ENCODE measurements at regions of chr3 and their contacts with region 1.

Region 1: DNA sequence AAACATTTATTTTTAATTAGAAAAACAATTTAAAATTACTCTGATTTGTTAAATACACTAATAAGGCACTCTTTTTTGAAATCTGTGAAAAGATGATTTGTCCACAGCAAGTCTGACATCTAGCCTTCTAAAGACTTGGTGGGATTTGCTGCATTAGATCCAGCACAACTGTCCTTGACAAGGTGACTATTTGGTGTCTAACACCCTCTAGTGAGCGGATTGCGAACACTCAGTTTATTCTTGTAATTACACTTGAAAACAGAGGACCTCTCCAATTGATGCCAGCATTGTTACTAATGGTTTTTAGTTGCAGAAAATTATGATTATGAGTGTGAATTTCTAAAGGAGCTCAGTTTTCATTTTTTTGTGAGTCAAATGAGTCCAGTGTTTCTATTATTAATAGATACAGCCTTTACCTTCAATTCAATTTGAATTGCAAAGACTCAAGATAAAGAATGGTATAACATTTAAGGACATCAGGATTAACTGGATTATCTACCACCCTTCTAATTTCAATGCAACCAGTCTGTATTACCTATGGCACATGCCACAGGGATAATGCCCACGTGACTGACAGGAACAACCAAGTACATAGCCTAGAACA is 29.7 kb upstream of the STRIT1 start:
- DNase-seq: no peak
- H3K4me3 ChIP-seq: no peak overlapping the region
- H3K27ac ChIP-seq: no peak overlapping the region
- H3K4me1 ChIP-seq: no peaks in the 10 kb centered on the region
- H3K27me3 ChIP-seq: no peaks in the 10 kb centered on the region
- CTCF ChIP-seq: peak; percentile 18 to 52 (median 29)

Region 2: DNA sequence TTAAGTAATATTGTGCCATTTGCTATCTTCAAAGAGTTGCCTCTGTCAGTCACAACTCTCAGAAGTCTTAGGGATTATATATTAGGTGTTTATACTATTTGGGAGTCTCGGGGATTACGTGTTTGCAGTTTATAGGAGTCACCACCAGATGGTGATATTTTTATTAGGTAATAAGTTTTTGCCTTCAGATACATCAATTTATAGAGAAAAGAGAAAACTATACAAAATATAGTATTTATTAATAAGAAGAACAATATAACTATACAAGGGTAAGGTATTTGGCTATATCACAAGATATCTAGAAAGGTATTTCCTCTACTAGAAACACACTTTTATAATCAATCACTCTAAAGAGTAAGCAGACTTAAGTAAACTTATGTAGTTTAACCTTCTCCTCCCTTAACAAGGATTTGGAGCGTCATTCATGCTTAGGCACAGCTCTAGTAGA is 988.2 kb before region 1 on chr3:
- intact Hi-C with region 1: loop called (anchors 5 kb)
- DNase-seq: no peak
- H3K4me3 ChIP-seq: no peak overlapping the region
- H3K27ac ChIP-seq: no peak overlapping the region
- H3K4me1 ChIP-seq: no peaks in the 10 kb centered on the region
- H3K27me3 ChIP-seq: no peaks in the 10 kb centered on the region
- CTCF ChIP-seq: peak in 2 of 3 experiments; percentile 52 to 60

Region 3: GRCh38 chr3:154759966-154760365 is 563.2 kb before region 1 on chr3:
- intact Hi-C with region 1: loop called (anchors 2 kb)
- DNase-seq: no peak
- H3K4me3 ChIP-seq: no peak overlapping the region
- H3K27ac ChIP-seq: no peak overlapping the region
- H3K4me1 ChIP-seq: no peaks in the 10 kb centered on the region
- H3K27me3 ChIP-seq: no peaks in the 10 kb centered on the region
- CTCF ChIP-seq: no peak

Region 4: GRCh38 chr3:155404486-155404885 is 81.3 kb after region 1 on chr3:
- intact Hi-C with region 1: no loop called
- DNase-seq: no peak
- H3K4me3 ChIP-seq: no peak overlapping the region
- H3K27ac ChIP-seq: no peak overlapping the region
- H3K4me1 ChIP-seq: no peaks in the 10 kb centered on the region
- H3K27me3 ChIP-seq: no peaks in the 10 kb centered on the region
- CTCF ChIP-seq: no peak

Measured in ascending aorta (tissue), 2 donors.